Dendritic cell treated with granulocyte-macrophage colony-stimulating factor and Interleukin-4, amounts not matched to agents 40 ng/mL and 50 ng/mL, for 4 days (primary cell): ENCODE measurements at regions of chr16 and their contacts with region 1.

Region 1: GRCh38 chr16:19086322-19087199 is 19.1 kb downstream of the COQ7 start:
- H3K4me3 Mint-ChIP-seq: peak overlapping the region; percentile 78
- H3K27ac Mint-ChIP-seq: peak overlapping the region; percentile 81
- H3K4me1 Mint-ChIP-seq: peaks cover 38% of the 10 kb centered on the region
- H3K27me3 Mint-ChIP-seq: peaks cover 13% of the 10 kb centered on the region

Region 2: GRCh38 chr16:19114352-19115052 is 27.9 kb after region 1 on chr16:
- intact Hi-C with region 1: loop called (anchors 1 kb)
- H3K4me3 Mint-ChIP-seq: peak overlapping the region; percentile 97
- H3K27ac Mint-ChIP-seq: peak overlapping the region; percentile 93
- H3K4me1 Mint-ChIP-seq: peaks cover 47% of the 10 kb centered on the region
- H3K27me3 Mint-ChIP-seq: no peaks in the 10 kb centered on the region

Region 3: GRCh38 chr16:19130852-19131810 is 44.6 kb after region 1 on chr16:
- intact Hi-C with region 1: loop called (anchors 1 kb)
- H3K4me3 Mint-ChIP-seq: peak overlapping the region; percentile 61
- H3K27ac Mint-ChIP-seq: peak overlapping the region; percentile 93
- H3K4me1 Mint-ChIP-seq: peaks cover 74% of the 10 kb centered on the region
- H3K27me3 Mint-ChIP-seq: no peaks in the 10 kb centered on the region

Region 4: GRCh38 chr16:19153876-19154275 is 67.3 kb after region 1 on chr16:
- intact Hi-C with region 1: no loop called
- H3K4me3 Mint-ChIP-seq: no peak overlapping the region
- H3K27ac Mint-ChIP-seq: no peak overlapping the region
- H3K4me1 Mint-ChIP-seq: peaks cover 34% of the 10 kb centered on the region
- H3K27me3 Mint-ChIP-seq: peaks cover 10% of the 10 kb centered on the region

Region 5: DNA sequence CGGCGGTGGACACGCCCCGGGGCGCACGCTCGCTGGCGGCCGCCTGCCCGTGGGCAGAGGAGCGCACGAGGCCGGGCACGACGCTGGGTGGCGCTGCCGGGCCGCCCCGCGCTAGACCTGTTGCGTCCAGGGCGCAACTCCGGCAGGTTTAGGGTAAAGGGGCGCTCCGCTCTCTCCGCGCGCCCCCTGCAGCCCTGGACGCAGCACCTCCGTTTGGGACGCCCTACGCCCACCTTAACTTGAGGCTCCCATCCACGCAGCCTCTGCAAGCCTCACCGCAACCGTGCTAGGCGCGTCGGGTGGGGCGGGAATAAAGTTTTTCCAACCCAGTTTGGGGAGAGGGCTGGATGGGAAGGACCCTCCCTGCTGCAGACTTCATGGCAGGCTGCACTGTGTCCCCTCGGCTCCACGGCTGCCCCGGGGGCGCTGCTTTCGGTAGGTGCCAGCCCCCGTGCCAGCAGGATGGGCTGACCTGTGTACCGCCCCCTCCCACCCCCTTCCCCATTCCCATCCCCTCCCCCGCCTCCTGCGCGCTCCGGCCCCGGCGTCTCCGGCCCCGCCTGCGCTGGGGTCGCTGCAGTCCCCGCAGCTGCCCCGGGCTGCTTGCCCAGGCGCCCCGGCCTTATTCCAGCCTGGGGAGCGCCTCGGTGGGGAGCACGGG is 81.3 kb after region 1 on chr16 and contains the start of gene SYT17:
- intact Hi-C with region 1: loop called (anchors 1 kb)
- H3K4me3 Mint-ChIP-seq: peak within 1 kb of the TSS; percentile 84
- H3K27ac Mint-ChIP-seq: peak within 1 kb of the TSS; percentile 79
- H3K4me1 Mint-ChIP-seq: peaks cover 23% of the 10 kb centered on the region
- H3K27me3 Mint-ChIP-seq: peaks cover 25% of the 10 kb centered on the region

Region 6: GRCh38 chr16:19375561-19376158 is 289.1 kb after region 1 on chr16:
- intact Hi-C with region 1: loop called (anchors 1 kb)
- H3K4me3 Mint-ChIP-seq: no peak overlapping the region
- H3K27ac Mint-ChIP-seq: no peak overlapping the region
- H3K4me1 Mint-ChIP-seq: no peaks in the 10 kb centered on the region
- H3K27me3 Mint-ChIP-seq: peaks cover 16% of the 10 kb centered on the region

Region 7: DNA sequence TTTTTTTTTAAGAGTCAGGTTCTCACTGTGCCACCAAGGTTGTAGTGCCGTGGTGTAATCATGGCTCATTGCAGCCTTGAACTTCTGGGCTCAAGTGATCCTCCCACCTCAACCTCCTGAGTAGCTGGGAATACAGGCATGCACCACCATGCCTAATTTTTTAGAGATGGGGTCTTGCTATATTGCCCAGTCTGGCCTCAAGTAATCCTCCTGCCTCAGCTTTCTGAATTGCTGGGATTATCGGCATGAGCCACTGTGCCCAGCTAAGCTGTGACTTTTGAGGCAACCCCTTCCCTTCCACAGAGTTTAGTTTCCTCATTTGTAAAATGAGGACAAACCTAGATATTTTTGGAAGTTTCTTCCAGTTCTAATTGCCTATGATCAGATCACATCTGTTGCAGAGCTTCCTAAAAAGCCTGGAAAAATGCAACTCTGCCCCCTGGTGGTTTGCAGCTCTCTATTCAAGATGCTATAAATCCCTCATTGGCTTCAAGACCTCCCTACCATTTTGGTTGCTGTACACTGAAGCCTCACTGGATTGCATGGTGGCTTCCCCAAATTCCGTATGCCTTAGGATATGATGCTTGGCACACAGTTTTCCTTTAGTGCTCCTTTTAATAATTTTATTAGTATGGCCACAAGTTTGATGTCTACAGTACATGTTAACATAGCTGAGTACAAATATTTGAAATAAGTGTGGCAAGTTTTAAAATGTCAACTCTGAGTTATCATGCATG is 416.0 kb after region 1 on chr16:
- intact Hi-C with region 1: loop called (anchors 1 kb)
- H3K4me3 Mint-ChIP-seq: no peak overlapping the region
- H3K27ac Mint-ChIP-seq: no peak overlapping the region
- H3K4me1 Mint-ChIP-seq: peaks cover 3% of the 10 kb centered on the region
- H3K27me3 Mint-ChIP-seq: no peaks in the 10 kb centered on the region